CD4-positive, alpha-beta memory T cell (primary cell): ENCODE measurements at regions of chr2 and their contacts with region 1.

Region 1: GRCh38 chr2:50492477-50492851 is 539.5 kb downstream of the NRXN1 start:
- DNase-seq: peak in 4 of 5 donors; percentile 23 to 32 (median 30)
- H3K4me3 ChIP-seq: no peak overlapping the region
- H3K4me3 Mint-ChIP-seq: peak overlapping the region in 6 of 8 donors; percentile 16 to 75 (median 52)
- H3K27ac ChIP-seq: no peak overlapping the region
- H3K27ac Mint-ChIP-seq: no peak overlapping the region
- H3K4me1 ChIP-seq: peaks cover 9% of the 10 kb centered on the region
- H3K4me1 Mint-ChIP-seq: peaks cover 16 to 29% (median 19%) of the 10 kb centered on the region in 4 donors
- H3K27me3 ChIP-seq: no peaks in the 10 kb centered on the region
- H3K27me3 Mint-ChIP-seq: peaks cover 0 to 1% of the 10 kb centered on the region in 2 donors

Region 2: GRCh38 chr2:48946449-48947048 is 1545.9 kb before region 1 on chr2:
- CTCF ChIA-PET with region 1: interaction called, 35 read pairs
- POLR2A ChIA-PET with region 1: no interaction called
- intact Hi-C with region 1: no loop called
- DNase-seq: peak in 4 of 5 donors; percentile 36 to 45 (median 40)
- H3K4me3 ChIP-seq: no peak overlapping the region
- H3K4me3 Mint-ChIP-seq: no peak overlapping the region
- H3K27ac ChIP-seq: no peak overlapping the region
- H3K27ac Mint-ChIP-seq: no peak overlapping the region
- H3K4me1 ChIP-seq: no peaks in the 10 kb centered on the region
- H3K4me1 Mint-ChIP-seq: no peaks in the 10 kb centered on the region
- H3K27me3 ChIP-seq: no peaks in the 10 kb centered on the region
- H3K27me3 Mint-ChIP-seq: peaks cover 3% of the 10 kb centered on the region in 2 donors

Region 3: GRCh38 chr2:49459314-49459993 is 1033.0 kb before region 1 on chr2:
- CTCF ChIA-PET with region 1: no interaction called
- POLR2A ChIA-PET with region 1: no interaction called
- intact Hi-C with region 1: no loop called
- DNase-seq: no peak
- H3K4me3 ChIP-seq: no peak overlapping the region
- H3K4me3 Mint-ChIP-seq: no peak overlapping the region
- H3K27ac ChIP-seq: no peak overlapping the region
- H3K27ac Mint-ChIP-seq: no peak overlapping the region
- H3K4me1 ChIP-seq: no peaks in the 10 kb centered on the region
- H3K4me1 Mint-ChIP-seq: no peaks in the 10 kb centered on the region
- H3K27me3 ChIP-seq: no peaks in the 10 kb centered on the region
- H3K27me3 Mint-ChIP-seq: no peaks in the 10 kb centered on the region

Region 4: GRCh38 chr2:50438259-50438658 is 54.2 kb before region 1 on chr2:
- CTCF ChIA-PET with region 1: no interaction called
- POLR2A ChIA-PET with region 1: no interaction called
- intact Hi-C with region 1: no loop called
- DNase-seq: no peak
- H3K4me3 ChIP-seq: no peak overlapping the region
- H3K4me3 Mint-ChIP-seq: no peak overlapping the region
- H3K27ac ChIP-seq: no peak overlapping the region
- H3K27ac Mint-ChIP-seq: no peak overlapping the region
- H3K4me1 ChIP-seq: no peaks in the 10 kb centered on the region
- H3K4me1 Mint-ChIP-seq: no peaks in the 10 kb centered on the region
- H3K27me3 ChIP-seq: no peaks in the 10 kb centered on the region
- H3K27me3 Mint-ChIP-seq: no peaks in the 10 kb centered on the region

Region 5: GRCh38 chr2:50791271-50791670 is 298.8 kb after region 1 on chr2:
- CTCF ChIA-PET with region 1: no interaction called
- POLR2A ChIA-PET with region 1: no interaction called
- intact Hi-C with region 1: no loop called
- DNase-seq: no peak
- H3K4me3 ChIP-seq: no peak overlapping the region
- H3K4me3 Mint-ChIP-seq: no peak overlapping the region
- H3K27ac ChIP-seq: no peak overlapping the region
- H3K27ac Mint-ChIP-seq: no peak overlapping the region
- H3K4me1 ChIP-seq: no peaks in the 10 kb centered on the region
- H3K4me1 Mint-ChIP-seq: no peaks in the 10 kb centered on the region
- H3K27me3 ChIP-seq: no peaks in the 10 kb centered on the region
- H3K27me3 Mint-ChIP-seq: no peaks in the 10 kb centered on the region